Activated CD4-positive, alpha-beta memory T cell treated with anti-CD3 and anti-CD28 coated beads, Interleukin-2, amount 10 ng/mL, durations not matched to agents 7 days and 5 days (primary cell): ENCODE measurements at regions of chr6 and their contacts with region 1.

Region 1: DNA sequence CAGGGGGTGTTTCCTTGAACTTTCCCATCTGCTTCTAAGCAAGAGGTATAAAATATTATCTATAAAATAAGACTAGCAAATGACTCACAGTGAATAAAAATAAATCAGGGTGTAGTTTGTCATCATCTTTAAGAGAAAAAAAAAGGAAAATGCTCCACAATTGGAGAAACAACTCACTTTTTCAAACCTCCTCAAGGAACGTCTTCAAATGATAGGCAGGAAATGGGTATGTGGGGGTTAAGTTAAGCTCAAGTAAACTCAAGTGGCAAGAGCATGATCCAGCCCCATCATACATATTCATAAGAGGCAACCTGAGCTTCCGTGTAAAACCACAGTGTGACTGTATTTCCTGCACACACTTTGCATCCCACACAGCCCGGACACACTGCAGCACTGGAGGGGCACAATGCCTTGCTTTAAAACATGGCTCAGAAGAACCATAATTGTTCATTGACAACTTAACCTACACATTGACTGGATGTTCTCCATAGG is 58.5 kb upstream of the CEP85L start:
- DNase-seq: peak; percentile 83
- H3K4me3 Mint-ChIP-seq: peak overlapping the region; percentile 96
- H3K27ac Mint-ChIP-seq: peak overlapping the region; percentile 94
- H3K4me1 Mint-ChIP-seq: peaks cover 64% of the 10 kb centered on the region
- H3K27me3 Mint-ChIP-seq: no peaks in the 10 kb centered on the region

Region 2: GRCh38 chr6:118641042-118641441 is 68.9 kb before region 1 on chr6:
- CTCF ChIA-PET with region 1: no interaction called
- POLR2A ChIA-PET with region 1: no interaction called
- DNase-seq: no peak
- H3K4me3 Mint-ChIP-seq: no peak overlapping the region
- H3K27ac Mint-ChIP-seq: no peak overlapping the region
- H3K4me1 Mint-ChIP-seq: peaks cover 31% of the 10 kb centered on the region
- H3K27me3 Mint-ChIP-seq: no peaks in the 10 kb centered on the region

Region 3: GRCh38 chr6:118656847-118657451 is 53.0 kb before region 1 on chr6:
- CTCF ChIA-PET with region 1: interaction called, 9 read pairs
- POLR2A ChIA-PET with region 1: interaction called, 26 read pairs
- DNase-seq: peak; percentile 24
- H3K4me3 Mint-ChIP-seq: no peak overlapping the region
- H3K27ac Mint-ChIP-seq: peak overlapping the region; percentile 50
- H3K4me1 Mint-ChIP-seq: peaks cover 34% of the 10 kb centered on the region
- H3K27me3 Mint-ChIP-seq: no peaks in the 10 kb centered on the region

Region 4: GRCh38 chr6:118697554-118697953 is 12.4 kb before region 1 on chr6:
- CTCF ChIA-PET with region 1: interaction called, 4 read pairs
- POLR2A ChIA-PET with region 1: interaction called, 14 read pairs
- DNase-seq: no peak
- H3K4me3 Mint-ChIP-seq: no peak overlapping the region
- H3K27ac Mint-ChIP-seq: no peak overlapping the region
- H3K4me1 Mint-ChIP-seq: peaks cover 13% of the 10 kb centered on the region
- H3K27me3 Mint-ChIP-seq: no peaks in the 10 kb centered on the region

Region 5: GRCh38 chr6:118776607-118777549 is 67.0 kb after region 1 on chr6:
- CTCF ChIA-PET with region 1: interaction called, 4 read pairs
- POLR2A ChIA-PET with region 1: interaction called, 12 read pairs
- DNase-seq: peak; percentile 71
- H3K4me3 Mint-ChIP-seq: no peak overlapping the region
- H3K27ac Mint-ChIP-seq: peak overlapping the region; percentile 0
- H3K4me1 Mint-ChIP-seq: peaks cover 12% of the 10 kb centered on the region
- H3K27me3 Mint-ChIP-seq: peaks cover 5% of the 10 kb centered on the region

Region 6: DNA sequence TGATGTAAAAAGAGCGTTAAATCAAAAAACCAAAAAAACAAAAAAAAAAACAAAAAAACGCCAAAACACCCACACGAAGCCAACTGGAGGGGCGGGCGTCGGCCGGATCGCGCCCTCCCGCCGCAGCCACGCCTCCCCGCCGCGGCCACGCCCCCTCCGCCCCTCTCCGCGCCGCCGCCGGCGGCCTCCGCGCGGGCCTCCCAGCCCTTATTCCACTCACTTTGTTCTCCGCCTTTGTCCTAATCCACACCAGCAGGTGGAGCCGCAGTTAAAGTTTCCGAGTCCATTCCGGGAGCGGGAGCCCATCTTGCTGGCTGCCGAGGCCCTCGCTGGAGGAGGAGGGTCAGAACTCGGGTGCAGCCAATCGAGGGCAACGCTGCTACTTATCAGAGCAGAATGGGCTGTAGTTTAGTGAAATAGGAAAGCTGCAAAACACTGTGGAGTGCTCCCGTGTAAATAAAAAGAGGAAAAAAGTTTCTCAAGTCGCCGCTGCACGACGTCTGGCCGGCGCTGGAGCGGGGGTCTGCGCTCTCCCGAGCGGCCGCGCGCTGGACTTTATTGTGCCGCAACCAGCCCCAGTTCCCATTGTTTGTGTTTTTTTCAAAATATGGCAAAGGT is 184.0 kb after region 1 on chr6 and contains the start of gene ASF1A:
- CTCF ChIA-PET with region 1: interaction called, 11 read pairs
- POLR2A ChIA-PET with region 1: interaction called, 146 read pairs
- DNase-seq: peak; percentile 97
- H3K4me3 Mint-ChIP-seq: peak within 1 kb of the TSS; percentile 79
- H3K27ac Mint-ChIP-seq: peak within 1 kb of the TSS; percentile 95
- H3K4me1 Mint-ChIP-seq: peaks cover 51% of the 10 kb centered on the region
- H3K27me3 Mint-ChIP-seq: no peaks in the 10 kb centered on the region
- total RNA-seq, gene ASF1A: 55.7 to 59.8 TPM

Region 7: DNA sequence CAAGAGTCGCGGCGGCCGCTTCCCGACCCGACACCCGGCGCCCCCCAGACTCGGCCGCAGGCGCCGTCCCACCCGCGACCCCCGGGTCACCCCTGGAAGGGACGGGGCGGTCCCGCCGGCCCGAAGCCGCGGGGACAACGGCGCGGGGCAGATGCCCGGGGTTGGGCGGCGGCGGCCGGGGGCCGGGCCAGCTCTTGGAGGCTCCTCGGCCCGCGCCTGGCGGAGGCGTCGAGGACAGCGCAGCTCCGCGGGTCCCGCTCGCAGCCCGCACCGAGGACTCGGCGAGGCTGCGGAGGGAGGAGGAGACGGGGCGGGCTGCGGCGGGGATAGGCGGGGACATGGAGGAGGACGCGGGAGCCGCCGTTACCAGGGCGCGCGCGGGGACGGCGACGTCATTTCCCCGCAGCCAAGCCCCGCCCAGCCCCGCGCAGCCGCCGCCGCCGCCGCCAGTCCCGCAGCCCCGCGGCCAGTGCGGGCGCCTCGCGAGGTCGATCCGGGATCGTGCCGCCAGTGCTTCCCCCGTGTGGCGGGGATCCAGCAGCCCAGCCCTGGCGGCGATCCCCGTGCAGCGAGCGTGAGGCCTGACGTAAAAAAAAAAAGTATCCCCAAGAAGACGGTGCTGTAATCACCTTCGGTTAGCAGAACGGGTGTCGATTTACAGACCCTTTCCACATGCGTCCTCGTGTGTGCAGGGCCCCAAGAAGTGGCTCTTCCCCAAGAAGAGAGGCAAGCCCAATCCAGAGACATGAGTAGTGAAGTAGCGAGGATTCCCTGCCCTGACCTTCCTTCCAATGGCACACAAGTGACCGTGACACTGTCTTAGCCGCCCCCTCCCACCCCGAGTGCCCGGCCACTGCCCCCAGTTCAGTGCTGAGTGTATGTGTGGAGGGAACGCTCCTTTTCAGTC is 368.7 kb after region 1 on chr6 and contains the start of gene FAM184A:
- CTCF ChIA-PET with region 1: no interaction called
- POLR2A ChIA-PET with region 1: interaction called, 12 read pairs
- DNase-seq: peak; percentile 75
- H3K4me3 Mint-ChIP-seq: peak within 1 kb of the TSS; percentile 88
- H3K27ac Mint-ChIP-seq: peak within 1 kb of the TSS; percentile 68
- H3K4me1 Mint-ChIP-seq: peaks cover 34% of the 10 kb centered on the region
- H3K27me3 Mint-ChIP-seq: peaks cover 10% of the 10 kb centered on the region
- total RNA-seq, gene FAM184A: 5.4 to 5.9 TPM